Naive thymus-derived CD8-positive, alpha-beta T cell (primary cell): ENCODE measurements at regions of chr3 and their contacts with region 1.

Region 1: DNA sequence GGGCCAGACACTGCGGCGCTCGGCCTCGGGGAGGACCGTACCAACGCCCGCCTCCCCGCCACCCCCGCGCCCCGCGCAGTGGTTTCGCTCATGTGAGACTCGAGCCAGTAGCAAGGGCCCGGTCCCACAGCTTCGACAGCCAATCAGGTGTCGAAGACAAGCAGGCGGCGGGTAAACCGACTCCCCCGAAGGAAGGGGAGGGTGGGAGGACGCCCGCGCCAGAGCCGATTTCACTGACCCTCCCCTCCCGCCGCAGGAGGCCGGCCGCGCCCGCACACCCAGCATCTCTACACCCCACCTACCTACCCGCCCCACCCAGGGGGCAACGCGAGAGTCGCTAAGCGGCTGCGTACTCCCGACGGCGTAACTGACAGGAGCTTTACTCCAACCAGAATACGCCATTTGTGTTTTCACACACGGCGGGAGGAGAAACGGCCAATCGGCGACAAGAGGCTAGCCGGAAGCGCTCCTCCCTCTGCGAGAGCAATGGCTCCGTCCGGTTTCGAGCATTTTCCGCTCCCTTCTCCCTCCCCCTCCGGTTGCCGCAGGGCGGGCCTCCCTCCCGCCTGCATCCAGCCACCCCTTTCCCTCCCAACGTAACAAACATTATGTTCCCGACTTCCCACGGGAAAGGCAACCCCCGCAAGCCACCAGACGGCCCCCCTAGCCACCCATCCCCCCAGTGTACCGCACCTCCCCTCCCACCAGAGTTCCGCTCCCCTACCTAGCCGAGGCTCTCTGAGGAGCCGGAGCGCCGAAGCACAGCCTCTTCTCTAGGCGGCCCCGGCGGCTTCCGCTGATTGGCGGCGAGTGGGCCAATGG is 504 bp upstream of the SETD5 start:
- DNase-seq: peak; percentile 96 to 100 (median 99)
- ATAC-seq: peak; percentile 70 to 71
- H3K4me3 Mint-ChIP-seq: peak overlapping the region; percentile 90 to 99 (median 96)
- H3K27ac Mint-ChIP-seq: peak overlapping the region; percentile 96 to 99 (median 98)
- H3K4me1 Mint-ChIP-seq: peaks cover 46 to 78% (median 71%) of the 10 kb centered on the region in 4 donors
- H3K27me3 Mint-ChIP-seq: peaks cover 0 to 4% (median 0%) of the 10 kb centered on the region in 5 donors

Region 2: GRCh38 chr3:9168241-9168741 is 228.6 kb before region 1 on chr3:
- POLR2A ChIA-PET with region 1: no interaction called
- DNase-seq: peak in 1 of 10 donors; percentile 4
- ATAC-seq: peak in 1 of 2 donors; percentile 35
- H3K4me3 Mint-ChIP-seq: no peak overlapping the region
- H3K27ac Mint-ChIP-seq: peak overlapping the region in 5 of 10 donors; percentile 17 to 87 (median 37)
- H3K4me1 Mint-ChIP-seq: peaks cover 16 to 31% (median 27%) of the 10 kb centered on the region in 4 donors
- H3K27me3 Mint-ChIP-seq: no peaks in the 10 kb centered on the region

Region 3: GRCh38 chr3:9362731-9363530 is 34.0 kb before region 1 on chr3 and contains the start of gene THUMPD3:
- POLR2A ChIA-PET with region 1: interaction called, 131 read pairs
- DNase-seq: peak; percentile 84 to 93 (median 87)
- ATAC-seq: peak; percentile 92 to 95
- H3K4me3 Mint-ChIP-seq: peak within 1 kb of the TSS; percentile 95 to 99 (median 98)
- H3K27ac Mint-ChIP-seq: peak within 1 kb of the TSS; percentile 97 to 99 (median 98)
- H3K4me1 Mint-ChIP-seq: peaks cover 4 to 37% (median 18%) of the 10 kb centered on the region in 4 donors
- H3K27me3 Mint-ChIP-seq: no peaks in the 10 kb centered on the region
- polyA plus RNA-seq, gene THUMPD3: 22.7 to 30.8 (median 23.5) TPM

Region 4: GRCh38 chr3:9384141-9384853 is 12.6 kb before region 1 on chr3:
- POLR2A ChIA-PET with region 1: interaction called, 34 read pairs
- DNase-seq: no peak
- ATAC-seq: no peak
- H3K4me3 Mint-ChIP-seq: no peak overlapping the region
- H3K27ac Mint-ChIP-seq: peak overlapping the region; percentile 22 to 90 (median 51)
- H3K4me1 Mint-ChIP-seq: peaks cover 19 to 44% (median 22%) of the 10 kb centered on the region in 4 donors
- H3K27me3 Mint-ChIP-seq: no peaks in the 10 kb centered on the region

Region 5: GRCh38 chr3:9649791-9650521 is 253.0 kb after region 1 on chr3:
- POLR2A ChIA-PET with region 1: interaction called, 24 read pairs
- DNase-seq: peak in 1 of 10 donors; percentile 7
- ATAC-seq: no peak
- H3K4me3 Mint-ChIP-seq: peak overlapping the region; percentile 80 to 99 (median 94)
- H3K27ac Mint-ChIP-seq: peak overlapping the region; percentile 88 to 98 (median 94)
- H3K4me1 Mint-ChIP-seq: peaks cover 18 to 51% (median 42%) of the 10 kb centered on the region in 4 donors
- H3K27me3 Mint-ChIP-seq: no peaks in the 10 kb centered on the region

Region 6: GRCh38 chr3:9792405-9793160 is 395.7 kb after region 1 on chr3 and contains the starts of genes ARPC4 and TADA3:
- POLR2A ChIA-PET with region 1: interaction called, 15 read pairs
- DNase-seq: peak; percentile 85 to 98 (median 89)
- ATAC-seq: peak; percentile 86 to 87
- H3K4me3 Mint-ChIP-seq: peak within 1 kb of the TSS; percentile 91 to 100 (median 96)
- H3K27ac Mint-ChIP-seq: peak within 1 kb of the TSS; percentile 95 to 100 (median 99)
- H3K4me1 Mint-ChIP-seq: peaks cover 36 to 78% (median 73%) of the 10 kb centered on the region in 4 donors
- H3K27me3 Mint-ChIP-seq: no peaks in the 10 kb centered on the region
- polyA plus RNA-seq, gene ARPC4: 201 to 229 (median 225) TPM
- polyA plus RNA-seq, gene TADA3: 38.2 to 51.2 (median 44.1) TPM